ENCODE measurements at regions of chr3 and their contacts with region 1.

Region 1: GRCh38 chr3:13229273-13229949 is 156.2 kb upstream of the IQSEC1 start:
- DNase-seq: peak; percentile 65
- ATAC-seq: peak; percentile 99
- H3K4me3 Mint-ChIP-seq: no peak overlapping the region
- H3K27ac Mint-ChIP-seq: no peak overlapping the region
- H3K4me1 Mint-ChIP-seq: peaks cover 24% of the 10 kb centered on the region
- H3K27me3 Mint-ChIP-seq: no peaks in the 10 kb centered on the region
- CTCF ChIP-seq: peak; percentile 20; the same call in 1 of the 2 replicates

Region 2: GRCh38 chr3:13200946-13201345 is 28.5 kb before region 1 on chr3:
- CTCF ChIA-PET with region 1: interaction called, 13 read pairs
- POLR2A ChIA-PET with region 1: no interaction called
- DNase-seq: peak; percentile 64
- ATAC-seq: peak; percentile 80
- H3K4me3 Mint-ChIP-seq: no peak overlapping the region
- H3K27ac Mint-ChIP-seq: peak overlapping the region; percentile 36; the same call in 1 of the 2 replicates
- H3K4me1 Mint-ChIP-seq: peaks cover 18% of the 10 kb centered on the region
- H3K27me3 Mint-ChIP-seq: no peaks in the 10 kb centered on the region
- CTCF ChIP-seq: 0 out of 2 replicates have a peak, but pooled peaks have one; percentile 19

Region 3: DNA sequence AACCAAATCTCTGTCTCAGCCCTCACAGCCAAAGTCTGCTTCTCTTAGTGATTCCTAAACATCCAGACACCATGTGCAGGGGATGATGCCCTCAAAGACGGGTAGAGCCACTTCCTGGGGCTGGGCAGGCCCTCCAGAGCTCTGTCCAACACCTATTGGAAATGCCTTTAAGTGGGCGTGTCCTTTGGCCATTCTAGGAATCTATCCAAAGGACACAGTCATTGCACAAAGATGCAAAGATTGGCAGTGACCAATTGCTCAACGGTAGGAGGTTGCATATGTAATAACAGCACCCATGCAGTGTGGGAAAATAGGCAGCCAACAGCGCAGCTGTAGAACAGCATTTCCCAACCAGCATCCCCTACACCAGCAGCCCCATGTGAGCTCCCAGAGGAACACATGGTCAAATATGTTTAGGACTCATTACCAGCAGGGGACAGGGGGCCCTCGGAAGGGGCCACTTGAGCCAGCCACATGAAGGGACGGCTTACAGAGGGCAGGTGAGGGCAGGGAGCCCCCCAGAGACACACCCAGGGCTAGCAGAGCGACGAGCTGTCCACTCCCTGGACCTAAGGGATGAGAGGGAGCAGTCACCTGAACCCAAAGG is 13.4 kb before region 1 on chr3:
- CTCF ChIA-PET with region 1: interaction called, 12 read pairs
- POLR2A ChIA-PET with region 1: no interaction called
- DNase-seq: no peak
- ATAC-seq: no peak
- H3K4me3 Mint-ChIP-seq: no peak overlapping the region
- H3K27ac Mint-ChIP-seq: no peak overlapping the region
- H3K4me1 Mint-ChIP-seq: peaks cover 8% of the 10 kb centered on the region; the same call in 1 of the 2 replicates
- H3K27me3 Mint-ChIP-seq: no peaks in the 10 kb centered on the region
- CTCF ChIP-seq: no peak

Region 4: DNA sequence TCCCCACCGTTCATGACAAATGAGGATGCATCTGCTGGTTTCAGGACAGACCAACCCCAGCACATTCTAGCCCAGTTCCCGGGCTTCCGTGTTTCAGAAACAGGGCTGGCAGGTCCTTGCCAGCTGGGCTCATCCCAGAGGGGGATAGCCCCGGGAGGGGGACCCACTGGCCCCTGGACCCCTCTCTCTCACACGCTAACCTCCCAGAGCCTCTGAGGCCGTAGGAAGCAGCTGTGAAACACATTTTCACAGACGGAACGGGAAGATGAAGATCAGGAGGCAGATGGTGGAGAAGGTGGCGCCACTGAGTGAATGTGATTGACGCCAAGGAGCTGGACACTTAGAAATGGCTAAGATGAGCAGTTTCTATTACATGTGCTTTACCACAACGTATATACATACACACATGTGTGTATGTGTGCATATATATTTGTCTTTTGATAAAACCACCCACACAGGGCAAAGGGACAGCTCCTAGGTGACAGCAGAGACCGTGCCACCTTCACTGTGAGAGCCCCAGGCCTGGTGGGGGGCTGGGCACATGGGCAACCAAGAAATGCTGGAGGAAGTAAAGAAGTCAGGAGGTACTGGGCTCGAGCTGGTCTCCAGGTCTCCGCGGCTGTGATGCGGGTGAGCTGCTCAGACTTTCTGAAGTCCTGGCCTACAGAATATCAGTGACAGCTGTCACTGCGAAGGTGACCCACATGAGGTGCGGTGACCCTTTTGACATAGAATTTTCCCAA is 12.4 kb after region 1 on chr3:
- CTCF ChIA-PET with region 1: interaction called, 12 read pairs
- POLR2A ChIA-PET with region 1: no interaction called
- DNase-seq: no peak
- ATAC-seq: no peak
- H3K4me3 Mint-ChIP-seq: no peak overlapping the region
- H3K27ac Mint-ChIP-seq: no peak overlapping the region
- H3K4me1 Mint-ChIP-seq: peaks cover 8% of the 10 kb centered on the region
- H3K27me3 Mint-ChIP-seq: no peaks in the 10 kb centered on the region
- CTCF ChIP-seq: no peak